ENCODE measurements at regions of chr14 and their contacts with region 1.

Region 1: DNA sequence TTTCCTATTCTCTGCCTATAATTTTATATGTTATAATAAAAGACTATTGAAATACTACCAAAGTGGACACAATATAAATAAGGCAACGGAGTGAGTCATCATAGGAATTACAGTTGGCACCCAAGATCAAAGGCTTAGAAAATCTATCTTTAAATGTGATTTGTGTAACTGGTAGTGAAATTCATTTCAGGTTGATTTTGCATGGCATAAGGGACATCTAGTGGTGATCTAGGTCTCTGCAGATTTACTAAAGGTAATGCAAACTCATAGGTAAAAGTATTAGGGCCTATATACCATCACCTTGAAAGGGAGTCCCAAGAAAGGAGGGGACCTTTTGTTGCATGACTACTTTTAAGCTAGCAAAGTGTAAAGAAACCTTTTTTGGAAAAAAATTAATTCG is 527.2 kb downstream of the NRXN3 start:
- DNase-seq: peak; percentile 14
- H3K4me3 ChIP-seq: no peak overlapping the region
- CTCF ChIP-seq: peak; percentile 58

Region 2: DNA sequence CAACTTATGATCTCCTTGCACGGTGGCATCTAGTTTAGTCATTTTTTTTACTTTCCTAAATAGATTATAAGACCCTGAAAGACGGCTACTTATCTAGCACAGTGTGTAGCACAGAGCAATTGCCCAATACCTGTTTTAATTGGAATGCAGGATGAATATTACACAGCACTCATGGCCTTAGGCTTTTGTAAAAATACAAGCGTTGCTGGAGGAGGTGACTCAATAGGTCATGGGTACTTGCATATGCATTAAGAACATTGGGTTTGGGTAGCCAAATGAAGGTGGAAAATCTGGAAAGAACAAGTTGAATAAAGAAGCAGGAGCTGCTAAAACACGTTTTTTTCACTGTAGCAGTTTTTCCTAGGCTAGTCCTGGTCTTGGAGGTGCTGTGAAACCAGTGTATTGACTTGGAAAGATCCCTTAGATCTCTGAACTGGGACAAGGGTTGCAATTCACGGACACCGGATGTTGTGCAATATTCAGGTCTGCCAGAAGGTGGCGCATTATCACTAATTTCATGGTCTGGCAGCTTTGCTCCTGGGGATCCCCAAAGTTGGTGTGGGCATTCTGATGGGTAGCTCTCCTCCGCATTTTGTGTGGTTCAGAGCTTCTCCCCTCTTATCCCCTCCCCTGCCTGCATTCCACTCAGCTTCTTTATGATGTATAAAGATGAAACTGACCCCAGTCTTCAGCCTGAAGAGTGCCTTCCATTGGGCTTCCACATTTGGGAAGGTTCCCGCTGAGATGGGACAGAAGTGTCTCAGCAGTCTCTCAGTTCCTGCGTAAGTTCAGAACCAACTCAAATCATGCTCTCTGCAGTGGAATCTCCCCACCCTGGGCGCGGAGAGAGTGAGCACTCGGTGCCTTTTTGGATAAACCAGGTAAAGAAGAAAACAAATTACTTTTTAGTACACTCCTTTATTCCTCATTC is 248.9 kb before region 1 on chr14:
- CTCF ChIA-PET with region 1: interaction called, 12 read pairs
- POLR2A ChIA-PET with region 1: no interaction called
- DNase-seq: no peak
- H3K4me3 ChIP-seq: no peak overlapping the region
- CTCF ChIP-seq: peak; percentile 41

Measured in AG04449 (cell line).